GM13976 (cell line): ENCODE measurements at regions of chr1 and their contacts with region 1.

Region 1: GRCh38 chr1:33758698-33759097 is 105.2 kb upstream of the HMGB4 start:
- DNase-seq: no peak
- CTCF ChIP-seq: no peak

Region 2: GRCh38 chr1:33866281-33866680 is 107.6 kb after region 1 on chr1:
- in situ Hi-C with region 1: loop called (anchors 25 kb)
- DNase-seq: no peak
- CTCF ChIP-seq: no peak